Calu3 (cell line): ENCODE measurements at regions of chr1 and their contacts with region 1.

Region 1: GRCh38 chr1:72037745-72038343 is 244.5 kb downstream of the NEGR1 start:
- DNase-seq: peak; percentile 57
- H3K4me3 Mint-ChIP-seq: no peak overlapping the region
- H3K27ac Mint-ChIP-seq: no peak overlapping the region
- H3K4me1 Mint-ChIP-seq: no peaks in the 10 kb centered on the region
- H3K27me3 Mint-ChIP-seq: no peaks in the 10 kb centered on the region
- CTCF ChIP-seq: peak; percentile 48

Region 2: GRCh38 chr1:71093938-71094337 is 943.9 kb before region 1 on chr1:
- CTCF ChIA-PET with region 1: interaction called, 5 read pairs
- intact Hi-C with region 1: loop called (anchors 5 kb)
- DNase-seq: no peak
- H3K4me3 Mint-ChIP-seq: no peak overlapping the region
- H3K27ac Mint-ChIP-seq: no peak overlapping the region
- H3K4me1 Mint-ChIP-seq: peaks cover 2% of the 10 kb centered on the region
- H3K27me3 Mint-ChIP-seq: no peaks in the 10 kb centered on the region
- CTCF ChIP-seq: no peak

Region 3: GRCh38 chr1:71196685-71197084 is 841.2 kb before region 1 on chr1:
- CTCF ChIA-PET with region 1: no interaction called
- intact Hi-C with region 1: loop called (anchors 2 kb)
- DNase-seq: no peak
- H3K4me3 Mint-ChIP-seq: no peak overlapping the region
- H3K27ac Mint-ChIP-seq: no peak overlapping the region
- H3K4me1 Mint-ChIP-seq: no peaks in the 10 kb centered on the region
- H3K27me3 Mint-ChIP-seq: no peaks in the 10 kb centered on the region
- CTCF ChIP-seq: no peak

Region 4: DNA sequence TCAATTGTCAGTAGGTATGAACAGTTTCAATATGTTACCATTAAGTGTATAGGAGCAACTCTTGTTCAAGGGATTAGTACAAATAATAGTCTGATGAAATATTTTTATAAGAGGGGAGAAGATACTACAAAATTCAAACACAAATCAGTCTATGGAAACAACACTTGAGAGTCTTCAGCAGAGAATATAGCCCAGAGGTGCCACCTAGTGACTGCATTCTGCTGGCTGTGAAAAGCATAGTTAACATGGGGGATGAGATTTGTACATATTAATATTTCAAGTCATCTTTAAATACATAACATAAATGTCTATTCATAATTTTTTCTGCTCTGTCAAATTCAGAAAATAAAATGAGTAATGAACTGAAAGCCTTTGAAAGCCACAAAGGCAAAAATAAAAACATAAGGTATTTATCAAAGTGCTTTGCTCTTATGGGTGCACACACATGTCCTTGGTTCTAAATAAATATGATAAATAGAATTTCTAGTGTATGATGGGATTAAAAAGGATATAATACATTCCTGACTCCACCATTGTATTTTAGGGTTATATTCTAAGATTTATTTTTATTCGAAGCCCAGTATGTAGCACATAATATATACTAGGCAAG is 516.1 kb before region 1 on chr1:
- CTCF ChIA-PET with region 1: no interaction called
- intact Hi-C with region 1: loop called (anchors 5 kb)
- DNase-seq: peak; percentile 51
- H3K4me3 Mint-ChIP-seq: no peak overlapping the region
- H3K27ac Mint-ChIP-seq: no peak overlapping the region
- H3K4me1 Mint-ChIP-seq: no peaks in the 10 kb centered on the region
- H3K27me3 Mint-ChIP-seq: no peaks in the 10 kb centered on the region
- CTCF ChIP-seq: peak; percentile 45

Region 5: DNA sequence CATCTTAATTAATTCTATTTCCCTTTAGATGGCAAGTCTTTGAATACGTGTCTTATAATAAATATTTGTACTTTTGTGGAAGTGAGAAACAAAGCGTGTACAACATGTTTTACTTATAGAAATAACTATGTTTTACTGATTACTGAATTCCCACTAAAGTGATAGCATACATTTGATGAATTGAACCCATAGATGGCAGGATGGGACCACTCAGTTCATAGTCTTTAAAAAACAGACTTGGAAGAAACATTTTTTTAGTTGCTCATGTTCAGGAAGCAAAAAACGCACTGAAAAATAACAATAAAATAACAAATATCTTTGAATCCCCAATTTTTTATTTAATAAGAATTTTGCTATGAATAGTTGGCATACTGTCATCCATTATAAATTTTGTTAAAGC is 449.9 kb before region 1 on chr1:
- CTCF ChIA-PET with region 1: no interaction called
- intact Hi-C with region 1: loop called (anchors 1 kb)
- DNase-seq: no peak
- H3K4me3 Mint-ChIP-seq: no peak overlapping the region
- H3K27ac Mint-ChIP-seq: no peak overlapping the region
- H3K4me1 Mint-ChIP-seq: no peaks in the 10 kb centered on the region
- H3K27me3 Mint-ChIP-seq: no peaks in the 10 kb centered on the region
- CTCF ChIP-seq: no peak